ENCODE measurements at regions of chr6 and their contacts with region 1.

Region 1: DNA sequence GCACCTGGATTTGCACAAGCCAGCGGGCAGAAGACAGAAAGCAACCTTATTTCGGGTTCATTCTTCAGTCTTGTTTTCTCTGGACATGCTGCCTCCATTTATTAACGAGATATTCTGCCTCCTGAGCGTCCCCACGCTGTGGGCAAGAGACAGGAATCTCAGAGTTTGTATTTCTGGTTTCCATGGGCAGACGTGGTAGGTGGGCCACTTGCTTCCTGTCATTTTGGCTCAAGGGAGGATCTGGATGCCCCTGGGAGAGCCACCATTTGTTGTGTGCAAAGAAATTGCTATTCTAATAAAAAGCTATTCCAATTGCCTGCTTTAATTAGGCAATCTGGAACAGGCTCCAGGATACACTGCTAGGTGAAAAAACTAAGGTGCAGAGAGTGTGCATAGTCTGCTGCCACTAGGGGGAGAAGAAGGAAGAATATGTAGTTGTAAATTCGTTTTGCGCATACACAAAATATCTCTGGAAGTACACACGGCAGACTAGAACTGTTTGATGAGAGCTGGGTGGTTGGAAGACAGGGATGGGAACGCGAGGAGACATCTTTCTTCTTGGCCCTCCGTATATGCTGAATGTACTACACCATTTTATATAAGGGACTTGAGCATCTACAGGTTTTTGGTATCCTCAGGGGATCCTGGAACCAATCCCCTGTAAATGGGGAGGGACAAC is 30.1 kb upstream of the SLC16A10 start:
- DNase-seq: no peak
- ATAC-seq: peak; percentile 21
- H3K4me3 Mint-ChIP-seq: no peak overlapping the region
- H3K27ac Mint-ChIP-seq: no peak overlapping the region
- H3K4me1 Mint-ChIP-seq: no peaks in the 10 kb centered on the region
- H3K27me3 Mint-ChIP-seq: peaks cover 4% of the 10 kb centered on the region
- CTCF ChIP-seq: peak; percentile 29

Region 2: GRCh38 chr6:110053395-110054240 is 1003.6 kb before region 1 on chr6:
- CTCF ChIA-PET with region 1: no interaction called
- POLR2A ChIA-PET with region 1: no interaction called
- intact Hi-C with region 1: no loop called
- DNase-seq: no peak
- ATAC-seq: no peak
- H3K4me3 Mint-ChIP-seq: no peak overlapping the region
- H3K27ac Mint-ChIP-seq: no peak overlapping the region
- H3K4me1 Mint-ChIP-seq: no peaks in the 10 kb centered on the region
- H3K27me3 Mint-ChIP-seq: peaks cover 3% of the 10 kb centered on the region
- CTCF ChIP-seq: no peak

Region 3: DNA sequence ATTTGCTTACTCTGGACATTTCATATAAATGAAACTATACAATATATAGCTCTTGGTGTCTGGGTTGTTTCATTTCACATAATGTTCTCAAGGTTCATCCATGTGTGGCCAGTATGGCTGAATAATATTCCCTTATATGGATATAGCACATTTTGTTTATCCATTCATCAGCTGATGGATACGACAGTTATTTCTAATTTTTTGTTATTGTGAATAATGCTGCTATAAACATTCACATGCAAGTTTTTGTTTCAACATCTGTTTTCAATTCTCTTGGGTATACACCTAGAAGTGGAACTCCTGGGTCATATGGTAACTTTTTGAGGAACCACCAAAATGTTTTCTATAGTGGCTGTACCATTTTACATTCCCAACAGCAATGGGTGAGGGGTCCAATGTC is 343.1 kb before region 1 on chr6:
- CTCF ChIA-PET with region 1: no interaction called
- POLR2A ChIA-PET with region 1: no interaction called
- intact Hi-C with region 1: no loop called
- DNase-seq: no peak
- ATAC-seq: peak; percentile 40
- H3K4me3 Mint-ChIP-seq: no peak overlapping the region
- H3K27ac Mint-ChIP-seq: peak overlapping the region; percentile 41
- H3K4me1 Mint-ChIP-seq: peaks cover 12% of the 10 kb centered on the region
- H3K27me3 Mint-ChIP-seq: no peaks in the 10 kb centered on the region
- CTCF ChIP-seq: no peak

Region 4: GRCh38 chr6:110769923-110770322 is 287.3 kb before region 1 on chr6:
- CTCF ChIA-PET with region 1: no interaction called
- POLR2A ChIA-PET with region 1: no interaction called
- intact Hi-C with region 1: no loop called
- DNase-seq: no peak
- ATAC-seq: no peak
- H3K4me3 Mint-ChIP-seq: no peak overlapping the region
- H3K27ac Mint-ChIP-seq: peak overlapping the region; percentile 57
- H3K4me1 Mint-ChIP-seq: peaks cover 10% of the 10 kb centered on the region
- H3K27me3 Mint-ChIP-seq: no peaks in the 10 kb centered on the region
- CTCF ChIP-seq: no peak

Region 5: GRCh38 chr6:110784610-110784979 is 272.6 kb before region 1 on chr6:
- CTCF ChIA-PET with region 1: no interaction called
- POLR2A ChIA-PET with region 1: no interaction called
- intact Hi-C with region 1: no loop called
- DNase-seq: no peak
- ATAC-seq: no peak
- H3K4me3 Mint-ChIP-seq: no peak overlapping the region
- H3K27ac Mint-ChIP-seq: peak overlapping the region; percentile 61
- H3K4me1 Mint-ChIP-seq: peaks cover 38% of the 10 kb centered on the region
- H3K27me3 Mint-ChIP-seq: no peaks in the 10 kb centered on the region
- CTCF ChIP-seq: no peak

Region 6: DNA sequence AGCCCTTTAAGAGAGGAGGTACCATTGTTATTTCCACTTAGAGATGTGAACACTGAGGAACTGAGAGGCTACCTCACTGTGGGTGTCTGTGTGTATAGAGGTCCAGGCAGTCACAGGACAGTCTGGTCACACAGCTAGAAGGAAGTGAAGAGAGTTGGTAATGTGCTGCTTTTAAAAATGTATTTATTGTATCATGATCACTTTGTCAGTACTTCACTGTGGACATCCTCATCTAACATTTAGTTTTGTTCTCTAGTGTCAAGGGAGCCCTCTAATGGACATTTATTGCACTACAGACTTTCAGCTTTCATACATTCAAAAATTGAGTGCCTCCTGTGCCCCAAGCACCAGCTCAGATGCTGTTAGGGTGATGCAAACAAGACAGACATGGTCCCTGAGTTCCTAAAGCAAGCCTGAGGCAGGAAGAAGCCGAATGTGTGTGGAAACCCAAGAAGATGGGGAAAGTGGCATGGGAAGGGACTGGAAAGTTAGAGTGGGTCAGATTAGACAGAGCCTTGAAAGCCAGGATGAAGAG is 153.0 kb after region 1 on chr6:
- CTCF ChIA-PET with region 1: interaction called, 17 read pairs
- POLR2A ChIA-PET with region 1: no interaction called
- intact Hi-C with region 1: loop called (anchors 1 kb)
- DNase-seq: no peak
- ATAC-seq: peak; percentile 68
- H3K4me3 Mint-ChIP-seq: no peak overlapping the region
- H3K27ac Mint-ChIP-seq: no peak overlapping the region
- H3K4me1 Mint-ChIP-seq: no peaks in the 10 kb centered on the region
- H3K27me3 Mint-ChIP-seq: no peaks in the 10 kb centered on the region
- CTCF ChIP-seq: no peak

Region 7: GRCh38 chr6:111642463-111643158 is 585.4 kb after region 1 on chr6:
- CTCF ChIA-PET with region 1: interaction called, 4 read pairs
- POLR2A ChIA-PET with region 1: no interaction called
- intact Hi-C with region 1: loop called (anchors 5 kb)
- DNase-seq: no peak
- ATAC-seq: peak; percentile 69
- H3K4me3 Mint-ChIP-seq: no peak overlapping the region
- H3K27ac Mint-ChIP-seq: no peak overlapping the region
- H3K4me1 Mint-ChIP-seq: no peaks in the 10 kb centered on the region
- H3K27me3 Mint-ChIP-seq: no peaks in the 10 kb centered on the region
- CTCF ChIP-seq: no peak